ENCODE measurements at regions of chr19 and their contacts with region 1.

Region 1: GRCh38 chr19:35557539-35558399 is 5.7 kb downstream of the ATP4A start:
- DNase-seq: no peak
- H3K4me3 ChIP-seq: peak overlapping the region in 1 of 3 experiments; percentile 24
- H3K27ac ChIP-seq: no peak overlapping the region
- H3K4me1 ChIP-seq: no peaks in the 10 kb centered on the region
- H3K27me3 ChIP-seq: peaks cover 23% of the 10 kb centered on the region
- CTCF ChIP-seq: no peak

Region 2: GRCh38 chr19:35609851-35610353 is 52.1 kb after region 1 on chr19:
- dilution Hi-C with region 1: loop called (anchors 5 kb)
- DNase-seq: no peak
- H3K4me3 ChIP-seq: no peak overlapping the region
- H3K27ac ChIP-seq: no peak overlapping the region
- H3K4me1 ChIP-seq: peaks cover 6% of the 10 kb centered on the region
- H3K27me3 ChIP-seq: no peaks in the 10 kb centered on the region
- CTCF ChIP-seq: no peak